Activated CD8-positive, alpha-beta T cell treated with anti-CD3 and anti-CD28 coated beads, Interleukin-2, amount 10 ng/mL, durations not matched to agents 7 days and 5 days (primary cell): ENCODE measurements at regions of chr4 and their contacts with region 1.

Region 1: GRCh38 chr4:55948726-55949474 is at the start of gene CEP135:
- DNase-seq: peak; percentile 93
- ATAC-seq: peak; percentile 86
- H3K4me3 Mint-ChIP-seq: peak within 1 kb of the TSS; percentile 76
- H3K27ac Mint-ChIP-seq: peak within 1 kb of the TSS; percentile 97
- H3K4me1 Mint-ChIP-seq: peaks cover 31% of the 10 kb centered on the region
- H3K27me3 Mint-ChIP-seq: no peaks in the 10 kb centered on the region
- total RNA-seq, gene CEP135: 16.4 to 17.0 TPM

Region 2: GRCh38 chr4:55592014-55592413 is 356.9 kb before region 1 on chr4 and contains the start of gene PDCL2:
- CTCF ChIA-PET with region 1: no interaction called
- POLR2A ChIA-PET with region 1: no interaction called
- DNase-seq: no peak
- ATAC-seq: no peak
- H3K4me3 Mint-ChIP-seq: no peak within 1 kb of the TSS
- H3K27ac Mint-ChIP-seq: no peak within 1 kb of the TSS
- H3K4me1 Mint-ChIP-seq: no peaks in the 10 kb centered on the region
- H3K27me3 Mint-ChIP-seq: peaks cover 2% of the 10 kb centered on the region
- total RNA-seq, gene PDCL2: not detected

Region 3: GRCh38 chr4:55904576-55904975 is 44.3 kb before region 1 on chr4:
- CTCF ChIA-PET with region 1: interaction called, 14 read pairs
- POLR2A ChIA-PET with region 1: interaction called, 5 read pairs
- DNase-seq: no peak
- ATAC-seq: no peak
- H3K4me3 Mint-ChIP-seq: no peak overlapping the region
- H3K27ac Mint-ChIP-seq: no peak overlapping the region
- H3K4me1 Mint-ChIP-seq: peaks cover 9% of the 10 kb centered on the region
- H3K27me3 Mint-ChIP-seq: no peaks in the 10 kb centered on the region

Region 4: DNA sequence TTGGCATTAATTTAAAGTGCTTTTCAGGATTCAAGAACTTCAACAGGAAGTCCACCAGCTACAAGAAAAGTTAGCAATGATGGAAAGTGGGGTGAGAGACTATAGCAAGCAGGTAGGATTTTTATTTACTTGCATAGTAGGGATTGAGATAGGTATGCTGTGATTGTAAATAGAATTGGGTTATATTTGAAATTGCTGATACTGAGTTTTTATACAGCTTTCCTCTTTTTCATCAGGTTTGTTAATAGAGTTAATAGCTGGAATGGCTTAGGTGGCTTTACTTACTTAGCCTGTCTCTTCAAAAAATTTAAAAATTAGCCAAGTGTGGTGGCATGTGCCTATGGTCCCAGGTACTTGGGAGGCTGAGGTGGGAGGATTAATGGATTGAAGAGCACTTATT is 10.8 kb after region 1 on chr4:
- CTCF ChIA-PET with region 1: interaction called, 36 read pairs
- POLR2A ChIA-PET with region 1: interaction called, 5 read pairs
- DNase-seq: no peak
- ATAC-seq: no peak
- H3K4me3 Mint-ChIP-seq: no peak overlapping the region
- H3K27ac Mint-ChIP-seq: no peak overlapping the region
- H3K4me1 Mint-ChIP-seq: no peaks in the 10 kb centered on the region
- H3K27me3 Mint-ChIP-seq: no peaks in the 10 kb centered on the region

Region 5: DNA sequence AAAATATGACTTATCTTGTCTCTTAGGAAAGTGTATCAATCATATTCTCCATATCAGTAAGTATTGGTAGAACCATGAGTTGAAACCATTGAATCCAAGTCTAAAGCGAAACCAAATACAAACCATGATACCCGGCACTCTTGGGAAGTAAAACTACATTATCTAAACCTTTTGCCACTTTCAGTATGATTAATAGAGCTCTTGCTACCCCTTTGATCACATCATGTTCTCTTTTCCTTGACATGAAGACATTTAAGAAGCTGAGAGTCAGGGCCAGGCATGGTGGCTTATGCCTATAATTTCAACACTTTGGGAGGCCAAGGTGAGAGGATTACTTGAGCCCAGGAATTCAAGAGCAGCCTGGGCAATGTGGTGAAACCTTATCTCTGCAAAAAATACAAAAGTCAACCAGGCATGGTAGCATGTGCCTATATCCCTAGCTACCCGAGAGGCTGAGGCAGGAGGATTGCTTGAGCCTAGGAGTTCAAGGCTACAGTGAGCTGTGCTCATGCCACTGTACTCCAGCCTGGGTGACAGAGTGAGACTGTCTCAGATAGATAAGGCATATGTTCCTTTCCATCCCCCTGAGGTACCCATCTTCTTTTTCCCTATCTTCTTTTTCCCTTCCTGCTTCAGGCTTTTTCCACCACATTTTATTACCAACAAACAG is 45.2 kb after region 1 on chr4:
- CTCF ChIA-PET with region 1: interaction called, 12 read pairs
- POLR2A ChIA-PET with region 1: interaction called, 5 read pairs
- DNase-seq: no peak
- ATAC-seq: peak; percentile 69
- H3K4me3 Mint-ChIP-seq: no peak overlapping the region
- H3K27ac Mint-ChIP-seq: no peak overlapping the region
- H3K4me1 Mint-ChIP-seq: peaks cover 16% of the 10 kb centered on the region
- H3K27me3 Mint-ChIP-seq: no peaks in the 10 kb centered on the region

Region 6: GRCh38 chr4:56048702-56049431 is 100.0 kb after region 1 on chr4:
- CTCF ChIA-PET with region 1: interaction called, 17 read pairs
- POLR2A ChIA-PET with region 1: no interaction called
- DNase-seq: peak; percentile 63
- ATAC-seq: peak; percentile 98
- H3K4me3 Mint-ChIP-seq: peak overlapping the region; percentile 64
- H3K27ac Mint-ChIP-seq: no peak overlapping the region
- H3K4me1 Mint-ChIP-seq: peaks cover 14% of the 10 kb centered on the region
- H3K27me3 Mint-ChIP-seq: peaks cover 51% of the 10 kb centered on the region

Region 7: DNA sequence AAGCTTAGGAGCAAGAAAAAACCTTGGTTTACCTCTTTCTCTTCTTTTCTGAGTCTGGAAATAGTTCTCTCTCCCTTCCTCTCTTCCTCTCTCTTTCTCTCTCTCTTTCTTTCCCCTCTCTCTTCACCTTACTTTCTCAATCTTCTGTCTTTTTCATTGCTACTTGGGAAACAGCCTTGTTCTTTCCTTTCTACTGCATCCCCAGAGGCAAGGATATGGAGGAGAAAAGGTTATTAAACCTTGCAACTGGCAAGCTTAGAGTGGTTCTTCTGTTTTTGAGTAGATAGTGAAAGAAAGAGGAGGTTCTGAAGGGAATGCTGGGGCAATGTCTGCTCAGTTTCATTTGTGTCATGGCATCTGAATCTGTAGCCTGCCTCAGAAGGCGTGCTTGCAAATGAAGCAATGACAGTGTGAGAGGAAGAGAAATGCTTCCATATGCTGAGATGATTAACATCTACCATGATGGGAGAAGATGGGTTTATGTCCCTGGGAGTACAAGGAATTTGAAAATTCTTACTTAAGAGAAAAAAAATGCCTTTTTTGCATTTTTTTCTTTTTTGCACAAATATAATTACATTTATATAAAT is 190.4 kb after region 1 on chr4:
- CTCF ChIA-PET with region 1: no interaction called
- POLR2A ChIA-PET with region 1: no interaction called
- DNase-seq: no peak
- ATAC-seq: no peak
- H3K4me3 Mint-ChIP-seq: no peak overlapping the region
- H3K27ac Mint-ChIP-seq: no peak overlapping the region
- H3K4me1 Mint-ChIP-seq: no peaks in the 10 kb centered on the region
- H3K27me3 Mint-ChIP-seq: peaks cover 12% of the 10 kb centered on the region